Activated CD4-positive, alpha-beta memory T cell treated with anti-CD3 and anti-CD28 coated beads for 36 hours (primary cell): ENCODE measurements at regions of chr15 and their contacts with region 1.

Region 1: GRCh38 chr15:50260969-50261496 is 4.5 kb downstream of the HDC start:
- DNase-seq: peak; percentile 41
- H3K4me3 Mint-ChIP-seq: peak overlapping the region; percentile 53
- H3K27ac Mint-ChIP-seq: peak overlapping the region; percentile 99
- H3K4me1 Mint-ChIP-seq: peaks cover 68% of the 10 kb centered on the region
- H3K27me3 Mint-ChIP-seq: no peaks in the 10 kb centered on the region

Region 2: DNA sequence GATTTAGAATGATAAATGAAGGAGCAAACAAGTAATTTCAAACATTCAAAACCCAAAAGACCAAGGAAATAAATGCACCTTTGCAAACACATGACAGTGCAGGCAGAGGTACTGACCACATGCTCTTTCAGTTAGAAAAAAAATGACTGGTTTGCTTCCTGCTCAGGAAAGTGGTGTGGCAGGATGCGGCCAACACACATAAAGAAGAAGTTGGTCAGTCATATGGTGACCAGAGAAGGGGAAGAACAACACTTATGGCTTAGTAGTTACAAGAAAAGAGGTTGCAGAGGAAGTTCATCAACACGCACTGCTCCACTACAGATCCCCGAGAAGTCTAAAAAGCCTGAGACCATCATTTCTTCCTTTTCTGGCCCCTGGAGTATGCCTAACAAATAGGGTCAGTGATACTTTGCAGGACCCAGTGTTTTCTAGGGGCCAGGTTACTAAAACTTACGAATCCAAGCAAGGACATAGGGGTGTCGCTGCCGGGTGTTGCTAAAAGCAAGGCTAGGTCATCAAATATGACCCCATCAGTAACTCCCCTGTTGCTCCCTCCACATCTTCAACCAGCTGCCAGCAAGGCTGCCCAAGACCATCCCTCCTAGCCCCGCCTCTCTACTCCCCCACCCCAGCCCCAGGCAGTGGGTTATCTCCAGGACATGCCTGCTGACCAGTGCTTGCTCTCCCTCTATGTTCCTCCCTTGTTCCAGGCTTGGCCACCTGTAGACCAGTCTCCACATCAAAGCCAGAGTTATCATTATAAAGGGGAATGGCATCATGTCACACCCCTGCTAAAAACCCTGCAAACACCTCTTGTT is 153.2 kb before region 1 on chr15:
- CTCF ChIA-PET with region 1: no interaction called
- POLR2A ChIA-PET with region 1: no interaction called
- intact Hi-C with region 1: loop called (anchors 2 kb)
- DNase-seq: peak; percentile 65
- H3K4me3 Mint-ChIP-seq: no peak overlapping the region
- H3K27ac Mint-ChIP-seq: peak overlapping the region; percentile 30
- H3K4me1 Mint-ChIP-seq: peaks cover 23% of the 10 kb centered on the region
- H3K27me3 Mint-ChIP-seq: peaks cover 2% of the 10 kb centered on the region

Region 3: DNA sequence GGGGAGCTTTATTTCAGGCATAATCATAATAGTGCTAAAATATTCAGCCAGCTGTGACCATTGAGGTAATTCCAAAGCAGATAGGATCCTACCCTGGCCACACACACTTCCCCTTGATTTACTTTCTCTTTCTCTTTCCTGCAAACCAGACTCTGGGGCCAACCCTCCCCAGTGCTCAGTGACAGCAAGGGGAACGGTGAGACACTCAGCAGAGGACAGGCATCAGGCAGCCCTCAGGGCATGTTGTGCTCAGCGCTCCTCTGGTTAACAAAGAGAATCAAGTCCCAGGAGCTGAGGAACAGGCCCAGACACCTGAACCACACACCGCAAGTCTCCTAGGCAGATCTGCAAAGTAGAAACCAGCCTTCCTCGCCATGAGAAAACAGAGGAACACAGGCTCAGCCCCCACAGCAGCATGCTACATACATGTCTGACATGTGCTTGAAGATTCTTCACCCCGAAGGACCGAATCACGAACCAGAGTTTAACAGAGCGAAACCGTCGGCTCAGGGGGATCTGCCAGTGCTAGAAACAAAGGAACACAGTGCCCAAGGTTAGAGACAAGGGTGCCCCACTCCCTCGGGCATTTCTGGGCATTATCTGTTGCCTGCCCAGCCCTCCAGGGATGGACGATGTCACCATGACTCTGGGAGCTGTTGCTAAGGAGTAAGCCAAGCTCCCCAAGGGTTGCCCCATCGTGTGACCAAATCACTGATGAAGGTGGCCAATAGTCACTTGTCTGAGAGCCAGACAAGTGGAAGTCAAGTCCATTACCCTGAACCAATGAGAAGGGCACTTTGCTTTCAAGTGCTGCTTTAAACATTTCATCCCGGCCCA is 13.0 kb before region 1 on chr15:
- CTCF ChIA-PET with region 1: interaction called, 21 read pairs
- POLR2A ChIA-PET with region 1: interaction called, 35 read pairs
- intact Hi-C with region 1: loop called (anchors 1 kb)
- DNase-seq: peak; percentile 82
- H3K4me3 Mint-ChIP-seq: peak overlapping the region; percentile 75
- H3K27ac Mint-ChIP-seq: peak overlapping the region; percentile 97
- H3K4me1 Mint-ChIP-seq: peaks cover 35% of the 10 kb centered on the region
- H3K27me3 Mint-ChIP-seq: no peaks in the 10 kb centered on the region

Region 4: DNA sequence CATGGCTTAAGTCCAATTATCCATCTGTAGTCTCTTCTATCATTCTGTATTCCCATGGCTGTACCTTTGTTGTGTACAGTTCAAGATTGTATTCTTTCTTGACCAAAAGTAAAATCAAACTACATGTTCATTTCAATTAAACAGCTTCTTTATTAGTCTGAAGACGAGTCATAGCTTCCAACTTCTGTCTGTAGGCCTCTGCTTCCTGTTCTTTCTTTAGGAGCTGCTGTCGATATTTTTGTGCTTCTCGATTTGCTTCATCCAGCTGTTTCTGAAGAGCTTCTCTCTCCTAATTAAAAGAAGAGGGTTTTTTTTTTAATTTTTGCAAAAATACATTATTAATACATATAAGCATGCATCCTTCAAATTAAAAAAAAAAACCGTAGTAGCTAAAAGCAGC is 17.5 kb after region 1 on chr15:
- CTCF ChIA-PET with region 1: interaction called, 4 read pairs
- POLR2A ChIA-PET with region 1: interaction called, 5 read pairs
- intact Hi-C with region 1: loop called (anchors 1 kb)
- DNase-seq: no peak
- H3K4me3 Mint-ChIP-seq: no peak overlapping the region
- H3K27ac Mint-ChIP-seq: peak overlapping the region; percentile 50
- H3K4me1 Mint-ChIP-seq: peaks cover 38% of the 10 kb centered on the region
- H3K27me3 Mint-ChIP-seq: no peaks in the 10 kb centered on the region

Region 5: GRCh38 chr15:50315814-50316630 is 55.0 kb after region 1 on chr15:
- CTCF ChIA-PET with region 1: interaction called, 4 read pairs
- POLR2A ChIA-PET with region 1: no interaction called
- intact Hi-C with region 1: loop called (anchors 1 kb)
- DNase-seq: no peak
- H3K4me3 Mint-ChIP-seq: no peak overlapping the region
- H3K27ac Mint-ChIP-seq: no peak overlapping the region
- H3K4me1 Mint-ChIP-seq: peaks cover 22% of the 10 kb centered on the region
- H3K27me3 Mint-ChIP-seq: no peaks in the 10 kb centered on the region